Right ventricle myocardium inferior (tissue), 1 donor: ENCODE measurements at regions of chr1 and their contacts with region 1.

Region 1: DNA sequence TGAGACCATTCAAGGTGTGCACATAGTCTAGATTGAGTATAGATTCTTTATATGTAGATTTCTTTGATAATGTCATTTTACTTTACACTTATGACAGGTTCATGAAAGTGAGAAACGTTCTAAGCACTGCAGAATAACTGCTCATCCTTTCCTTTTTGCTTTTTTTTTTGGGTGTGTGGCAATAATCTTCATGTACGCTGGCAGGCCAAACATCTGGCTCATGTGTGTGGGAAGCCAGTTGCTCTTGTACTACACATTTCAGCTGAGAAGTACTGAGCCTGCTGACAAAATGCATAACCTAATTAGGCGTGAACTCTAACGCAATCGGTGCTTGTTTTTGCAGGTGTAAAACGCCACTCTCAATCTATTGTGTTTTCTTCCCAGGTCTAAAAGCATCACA is 350.8 kb upstream of the KAZN start:
- DNase-seq: no peak
- ATAC-seq: no peak

Region 2: DNA sequence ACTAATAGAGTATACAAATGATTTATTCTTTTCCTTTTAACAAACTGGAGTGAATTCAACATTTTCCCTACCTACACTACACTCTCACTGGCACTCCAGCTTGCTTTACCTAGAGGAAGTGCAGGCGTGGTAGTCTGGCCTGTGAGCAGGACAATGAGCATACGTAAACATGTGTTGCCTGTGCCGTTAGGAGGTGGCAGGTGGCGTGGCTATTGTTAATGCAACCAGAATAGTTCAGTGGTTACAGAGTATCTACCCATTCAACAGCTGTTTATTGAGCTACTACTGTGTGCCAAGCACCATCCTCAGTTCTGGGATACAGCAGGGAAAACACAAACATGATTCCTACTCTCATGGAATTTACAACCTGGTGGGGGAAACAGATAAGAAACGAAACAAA is 51.1 kb after region 1 on chr1:
- intact Hi-C with region 1: loop called (anchors 2 kb)
- DNase-seq: no peak
- ATAC-seq: no peak